Activated CD4-positive, alpha-beta T cell treated with anti-CD3 and anti-CD28 coated beads, Interleukin-2, amount 10 ng/mL, durations not matched to agents 24 days and 14 days (primary cell): ENCODE measurements at regions of chr2 and their contacts with region 1.

Region 1: GRCh38 chr2:207328944-207329386 is 163.2 kb upstream of the KLF7 start:
- DNase-seq: no peak
- H3K4me3 Mint-ChIP-seq: peak overlapping the region; percentile 63
- H3K27ac Mint-ChIP-seq: peak overlapping the region; percentile 80
- H3K4me1 Mint-ChIP-seq: peaks cover 56% of the 10 kb centered on the region
- H3K27me3 Mint-ChIP-seq: no peaks in the 10 kb centered on the region

Region 2: DNA sequence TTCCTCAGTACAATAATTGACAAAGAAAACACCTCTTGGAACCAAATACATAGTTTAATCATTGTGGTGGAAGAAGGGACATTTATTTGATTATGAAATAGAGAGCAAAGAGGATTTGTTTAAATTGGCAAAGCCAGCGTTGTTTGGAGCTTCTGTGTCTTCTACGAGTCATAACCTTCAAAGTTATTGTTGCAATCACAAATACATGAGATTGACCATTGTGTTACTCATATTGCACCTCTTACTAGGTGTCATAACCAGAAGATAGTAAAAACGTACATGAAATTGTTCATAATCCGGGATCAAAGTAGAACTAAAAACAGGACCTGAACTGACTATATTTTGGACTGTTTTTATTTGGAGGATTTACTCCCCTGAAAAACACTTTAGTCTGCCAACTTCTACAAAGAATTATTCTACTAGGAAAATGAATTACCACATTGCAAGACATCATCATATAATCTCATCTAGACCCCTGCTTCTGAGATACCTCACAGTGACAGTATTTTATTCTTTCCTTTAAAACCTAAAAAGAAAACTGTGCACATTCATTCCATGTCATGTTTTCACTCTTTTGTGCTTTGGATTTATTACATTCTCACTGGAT is 11.5 kb before region 1 on chr2:
- intact Hi-C with region 1: loop called (anchors 1 kb)
- DNase-seq: no peak
- H3K4me3 Mint-ChIP-seq: peak overlapping the region; percentile 4
- H3K27ac Mint-ChIP-seq: peak overlapping the region; percentile 57
- H3K4me1 Mint-ChIP-seq: peaks cover 31% of the 10 kb centered on the region
- H3K27me3 Mint-ChIP-seq: no peaks in the 10 kb centered on the region

Region 3: GRCh38 chr2:208148803-208149202 is 819.8 kb after region 1 on chr2:
- intact Hi-C with region 1: no loop called
- DNase-seq: no peak
- H3K4me3 Mint-ChIP-seq: no peak overlapping the region
- H3K27ac Mint-ChIP-seq: no peak overlapping the region
- H3K4me1 Mint-ChIP-seq: no peaks in the 10 kb centered on the region
- H3K27me3 Mint-ChIP-seq: peaks cover 12% of the 10 kb centered on the region